PC-9 (cell line): ENCODE measurements at regions of chr10 and their contacts with region 1.

Region 1: DNA sequence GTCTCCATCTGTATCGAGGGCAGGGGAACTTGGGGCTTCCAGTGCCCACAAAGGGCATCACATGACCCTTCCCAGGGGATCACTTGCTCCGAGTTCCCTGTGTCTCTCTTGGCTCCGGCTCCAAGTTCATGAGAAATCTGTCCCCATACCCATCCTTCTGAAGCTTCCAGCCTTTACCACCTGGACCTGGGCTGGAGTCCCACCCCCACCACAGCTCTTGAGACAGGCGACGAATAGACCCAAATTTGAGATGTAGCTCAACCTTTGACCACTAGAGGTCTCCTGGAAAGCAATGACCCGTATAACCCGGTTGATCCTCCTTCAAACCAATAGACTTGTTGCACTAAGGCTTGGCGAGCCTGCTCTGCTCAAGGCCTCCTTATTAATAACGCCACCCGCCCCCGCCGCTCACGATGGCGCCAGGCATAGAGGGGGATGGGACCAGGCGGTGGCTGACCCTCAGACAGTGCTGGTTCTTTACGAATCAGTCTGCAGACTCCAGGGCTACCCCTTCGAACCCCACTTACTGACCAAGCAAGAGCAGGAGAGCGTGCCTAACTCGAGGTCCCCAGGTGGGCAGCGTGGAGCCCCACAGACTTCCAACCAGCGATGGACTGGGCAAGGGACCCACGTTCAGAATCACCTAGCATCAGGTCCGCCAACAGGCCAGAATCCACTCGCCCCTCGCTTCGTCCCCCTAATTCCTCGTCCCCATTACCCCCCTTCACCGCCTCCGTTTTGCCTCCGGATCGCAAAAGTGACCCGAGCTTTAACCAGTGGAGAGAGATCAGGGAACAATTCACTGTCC is 4.4 kb upstream of the ARID5B start:
- DNase-seq: no peak
- H3K4me3 ChIP-seq: no peak overlapping the region
- H3K27ac ChIP-seq: no peak overlapping the region
- H3K4me1 ChIP-seq: peaks cover 22% of the 10 kb centered on the region
- H3K27me3 ChIP-seq: no peaks in the 10 kb centered on the region
- CTCF ChIP-seq: peak; percentile 64

Region 2: DNA sequence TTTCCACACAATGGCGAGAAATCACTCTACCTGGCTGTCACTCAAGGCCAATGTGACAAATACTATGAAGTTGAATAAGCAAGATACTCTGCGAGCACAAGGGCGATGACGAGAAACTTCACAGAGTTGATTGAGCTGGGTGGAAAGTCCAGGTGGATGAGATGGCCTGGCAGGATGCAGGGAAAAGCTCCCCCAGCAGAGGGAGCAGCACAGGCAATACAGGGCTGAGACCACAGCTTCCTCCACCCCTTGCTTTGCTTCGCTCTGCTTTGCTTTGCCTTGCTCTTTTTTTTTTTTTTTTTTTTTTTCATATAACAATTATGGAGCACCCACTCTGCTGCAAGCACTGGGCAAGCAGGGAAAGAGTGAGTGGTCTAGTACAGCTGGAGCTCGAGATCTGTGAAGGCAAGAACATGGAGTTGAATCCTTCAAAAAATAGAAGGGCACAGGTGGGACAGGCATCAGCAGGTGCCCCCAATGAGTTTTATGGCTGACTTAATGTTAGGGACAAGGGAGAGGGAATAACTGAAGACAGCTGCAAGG is 146.1 kb before region 1 on chr10:
- CTCF ChIA-PET with region 1: interaction called, 11 read pairs
- POLR2A ChIA-PET with region 1: no interaction called
- intact Hi-C with region 1: loop called (anchors 1 kb)
- DNase-seq: peak in 1 of 2 experiments; percentile 57
- H3K4me3 ChIP-seq: no peak overlapping the region
- H3K27ac ChIP-seq: no peak overlapping the region
- H3K4me1 ChIP-seq: peaks cover 17% of the 10 kb centered on the region
- H3K27me3 ChIP-seq: no peaks in the 10 kb centered on the region
- CTCF ChIP-seq: peak; percentile 55

Region 3: GRCh38 chr10:61929555-61929954 is 32.5 kb after region 1 on chr10:
- CTCF ChIA-PET with region 1: no interaction called
- POLR2A ChIA-PET with region 1: interaction called, 20 read pairs
- intact Hi-C with region 1: no loop called
- DNase-seq: no peak
- H3K4me3 ChIP-seq: no peak overlapping the region
- H3K27ac ChIP-seq: no peak overlapping the region
- H3K4me1 ChIP-seq: no peaks in the 10 kb centered on the region; the same call in 1 of the 2 replicates
- H3K27me3 ChIP-seq: no peaks in the 10 kb centered on the region
- CTCF ChIP-seq: no peak